ENCODE measurements at regions of chr19 and their contacts with region 1.

Region 1: DNA sequence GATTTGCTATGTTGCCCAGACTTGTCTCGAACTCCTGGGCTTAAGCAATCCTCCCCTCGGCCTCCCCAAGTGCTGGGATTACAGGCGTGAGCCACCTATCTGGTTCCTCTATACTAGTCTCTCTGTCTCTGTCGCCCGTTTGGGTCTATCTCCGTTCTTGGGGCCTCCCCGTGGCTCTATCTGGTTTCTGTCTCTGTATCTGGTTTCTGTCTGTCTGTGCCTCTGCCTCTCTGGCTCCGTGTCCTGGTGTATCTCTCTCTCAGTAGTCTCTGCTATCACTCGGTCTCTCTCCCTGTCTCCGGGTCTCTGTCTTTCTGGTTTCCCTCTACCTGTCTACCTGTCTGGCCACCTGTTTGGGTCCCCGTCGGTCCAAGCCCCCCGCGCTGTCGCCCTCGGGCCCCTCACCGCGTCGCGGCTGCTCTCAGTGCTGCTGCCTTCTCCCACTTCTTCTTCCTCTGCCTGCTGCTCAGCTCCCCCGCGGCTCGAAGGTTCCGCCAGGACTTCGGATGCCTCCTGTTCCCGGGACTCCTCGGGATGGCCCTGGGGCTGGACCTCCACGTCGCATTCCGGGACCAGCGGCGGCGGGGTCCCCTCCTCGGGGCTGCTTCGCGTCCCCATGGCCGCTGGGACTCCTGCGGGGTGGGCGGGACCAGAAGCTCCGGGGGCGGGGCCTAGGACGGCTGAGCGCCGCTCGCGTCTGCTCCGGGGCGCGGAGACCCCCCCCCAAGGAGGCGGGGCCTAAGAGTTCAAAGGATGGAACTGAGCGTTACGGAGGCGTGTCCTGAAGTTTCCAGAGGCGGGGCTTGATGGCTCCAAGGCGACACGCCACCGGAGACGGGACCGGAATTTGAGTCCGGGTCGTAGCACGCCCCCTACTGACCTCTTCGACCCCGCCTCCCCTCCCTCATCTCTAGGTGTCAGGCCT is 783 bp downstream of the PHLDB3 start:
- DNase-seq: peak; percentile 98 to 99
- H3K4me3 ChIP-seq: peak overlapping the region; percentile 91
- H3K4me3 Mint-ChIP-seq: peak overlapping the region; percentile 90
- H3K27ac Mint-ChIP-seq: peak overlapping the region; percentile 92
- H3K4me1 ChIP-seq: peaks cover 25% of the 10 kb centered on the region
- H3K4me1 Mint-ChIP-seq: peaks cover 33% of the 10 kb centered on the region
- H3K27me3 ChIP-seq: no peaks in the 10 kb centered on the region
- H3K27me3 Mint-ChIP-seq: no peaks in the 10 kb centered on the region
- CTCF ChIP-seq: peak; percentile 49 to 64

Region 2: DNA sequence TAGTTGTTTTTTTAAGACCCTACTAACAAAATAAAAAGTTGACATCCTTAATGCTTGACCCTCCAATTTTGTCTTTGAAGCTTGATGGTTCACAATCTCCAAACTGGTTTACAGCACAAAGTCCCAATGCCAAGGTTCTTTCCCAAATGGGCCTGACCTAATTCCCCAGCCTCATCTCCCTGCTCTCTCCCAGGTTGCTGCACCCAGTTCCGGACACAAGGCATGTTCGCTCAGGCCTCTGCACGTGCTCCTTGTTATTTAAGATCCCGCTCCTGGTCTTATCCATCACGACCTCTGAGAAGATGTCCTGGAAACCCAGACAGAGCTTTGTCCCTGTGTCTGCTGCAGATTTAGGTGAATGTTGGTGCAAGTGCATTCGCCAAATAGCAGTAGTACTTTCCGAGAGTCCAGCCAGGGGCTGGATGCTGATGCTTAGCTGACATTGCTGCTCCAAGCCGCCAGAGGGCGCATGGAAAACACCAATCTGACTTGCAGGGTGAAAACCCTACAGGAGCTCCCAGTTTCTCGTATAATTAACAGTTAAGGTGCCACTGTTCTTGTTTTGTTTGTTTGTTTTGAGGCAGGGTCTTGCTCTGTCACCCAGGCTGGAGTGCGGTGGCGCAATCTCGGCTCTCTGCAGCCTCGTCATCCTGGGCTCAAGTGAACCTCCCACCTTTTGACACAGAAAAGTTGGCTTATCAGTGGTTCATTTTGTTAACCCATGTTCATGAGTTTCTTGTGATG is 56.8 kb before region 1 on chr19:
- CTCF ChIA-PET with region 1: interaction called, 29 read pairs
- POLR2A ChIA-PET with region 1: interaction called, 3 read pairs
- intact Hi-C with region 1: loop called (anchors 5 kb)
- DNase-seq: peak; percentile 71 to 82
- H3K4me3 ChIP-seq: no peak overlapping the region
- H3K4me3 Mint-ChIP-seq: no peak overlapping the region
- H3K27ac Mint-ChIP-seq: no peak overlapping the region
- H3K4me1 ChIP-seq: no peaks in the 10 kb centered on the region
- H3K4me1 Mint-ChIP-seq: peaks cover 5% of the 10 kb centered on the region
- H3K27me3 ChIP-seq: no peaks in the 10 kb centered on the region
- H3K27me3 Mint-ChIP-seq: peaks cover 2% of the 10 kb centered on the region
- CTCF ChIP-seq: peak; percentile 94 to 98

Region 3: DNA sequence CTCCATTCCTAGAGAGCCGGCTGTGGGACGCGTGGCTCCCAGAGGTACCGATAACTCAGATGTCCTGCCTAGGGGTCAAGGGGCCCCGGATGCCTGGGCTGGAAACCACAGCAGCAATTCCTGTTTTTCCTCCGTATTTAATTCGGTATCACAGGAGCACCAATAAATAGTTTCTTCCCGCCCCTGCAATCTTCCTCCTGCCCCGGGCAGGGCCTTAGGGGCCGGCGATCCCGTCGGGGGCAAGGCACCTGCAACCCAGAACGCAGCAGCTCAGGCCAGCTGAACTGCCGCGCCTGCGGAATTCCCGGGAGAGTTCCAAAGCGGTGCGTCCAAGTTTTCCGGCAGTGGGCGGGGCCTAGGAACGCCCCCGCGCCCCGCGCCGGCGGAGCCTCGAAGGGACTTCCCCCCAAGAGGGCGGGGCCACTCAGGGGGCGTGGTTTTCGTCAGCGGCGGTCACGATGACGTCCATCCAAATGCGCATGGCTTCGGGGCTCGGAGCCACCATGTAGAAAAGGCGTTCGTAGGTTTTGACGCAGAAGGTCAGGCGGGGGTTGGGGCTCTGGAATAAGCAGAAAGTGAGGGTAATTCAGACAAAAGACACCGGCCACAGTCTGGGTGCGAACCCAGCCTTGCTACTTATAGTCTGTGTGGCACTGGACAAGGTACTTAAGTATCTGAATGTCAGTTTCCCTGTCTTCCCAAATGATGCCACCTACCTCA is 28.6 kb before region 1 on chr19:
- CTCF ChIA-PET with region 1: no interaction called
- POLR2A ChIA-PET with region 1: no interaction called
- intact Hi-C with region 1: loop called (anchors 1 kb)
- DNase-seq: peak; percentile 96 to 99
- H3K4me3 ChIP-seq: peak overlapping the region; percentile 30
- H3K4me3 Mint-ChIP-seq: peak overlapping the region; percentile 89
- H3K27ac Mint-ChIP-seq: peak overlapping the region; percentile 95
- H3K4me1 ChIP-seq: peaks cover 14% of the 10 kb centered on the region
- H3K4me1 Mint-ChIP-seq: peaks cover 6% of the 10 kb centered on the region
- H3K27me3 ChIP-seq: no peaks in the 10 kb centered on the region
- H3K27me3 Mint-ChIP-seq: no peaks in the 10 kb centered on the region
- CTCF ChIP-seq: no peak

Region 4: GRCh38 chr19:43486412-43486811 is 17.4 kb before region 1 on chr19:
- CTCF ChIA-PET with region 1: no interaction called
- POLR2A ChIA-PET with region 1: no interaction called
- intact Hi-C with region 1: no loop called
- DNase-seq: no peak
- H3K4me3 ChIP-seq: no peak overlapping the region
- H3K4me3 Mint-ChIP-seq: no peak overlapping the region
- H3K27ac Mint-ChIP-seq: no peak overlapping the region
- H3K4me1 ChIP-seq: no peaks in the 10 kb centered on the region
- H3K4me1 Mint-ChIP-seq: no peaks in the 10 kb centered on the region
- H3K27me3 ChIP-seq: no peaks in the 10 kb centered on the region
- H3K27me3 Mint-ChIP-seq: no peaks in the 10 kb centered on the region
- CTCF ChIP-seq: no peak

Measured in Caco-2 (cell line).